ENCODE measurements at regions of chr5 and their contacts with region 1.

Region 1: GRCh38 chr5:114361724-114362196 is at the start of gene KCNN2:
- DNase-seq: peak; percentile 86
- H3K4me3 Mint-ChIP-seq: peak within 1 kb of the TSS; percentile 99
- H3K27ac Mint-ChIP-seq: peak within 1 kb of the TSS; percentile 87
- H3K4me1 Mint-ChIP-seq: no peaks in the 10 kb centered on the region
- H3K27me3 Mint-ChIP-seq: peaks cover 35% of the 10 kb centered on the region
- CTCF ChIP-seq: no peak
- total RNA-seq, gene KCNN2: 1.2 and 2.0 TPM in 2 replicates

Region 2: GRCh38 chr5:114789773-114790402 is 428.1 kb after region 1 on chr5:
- CTCF ChIA-PET with region 1: no interaction called
- intact Hi-C with region 1: loop called (anchors 5 kb)
- DNase-seq: no peak
- H3K4me3 Mint-ChIP-seq: no peak overlapping the region
- H3K27ac Mint-ChIP-seq: no peak overlapping the region
- H3K4me1 Mint-ChIP-seq: no peaks in the 10 kb centered on the region
- H3K27me3 Mint-ChIP-seq: no peaks in the 10 kb centered on the region
- CTCF ChIP-seq: peak; percentile 19

Region 3: DNA sequence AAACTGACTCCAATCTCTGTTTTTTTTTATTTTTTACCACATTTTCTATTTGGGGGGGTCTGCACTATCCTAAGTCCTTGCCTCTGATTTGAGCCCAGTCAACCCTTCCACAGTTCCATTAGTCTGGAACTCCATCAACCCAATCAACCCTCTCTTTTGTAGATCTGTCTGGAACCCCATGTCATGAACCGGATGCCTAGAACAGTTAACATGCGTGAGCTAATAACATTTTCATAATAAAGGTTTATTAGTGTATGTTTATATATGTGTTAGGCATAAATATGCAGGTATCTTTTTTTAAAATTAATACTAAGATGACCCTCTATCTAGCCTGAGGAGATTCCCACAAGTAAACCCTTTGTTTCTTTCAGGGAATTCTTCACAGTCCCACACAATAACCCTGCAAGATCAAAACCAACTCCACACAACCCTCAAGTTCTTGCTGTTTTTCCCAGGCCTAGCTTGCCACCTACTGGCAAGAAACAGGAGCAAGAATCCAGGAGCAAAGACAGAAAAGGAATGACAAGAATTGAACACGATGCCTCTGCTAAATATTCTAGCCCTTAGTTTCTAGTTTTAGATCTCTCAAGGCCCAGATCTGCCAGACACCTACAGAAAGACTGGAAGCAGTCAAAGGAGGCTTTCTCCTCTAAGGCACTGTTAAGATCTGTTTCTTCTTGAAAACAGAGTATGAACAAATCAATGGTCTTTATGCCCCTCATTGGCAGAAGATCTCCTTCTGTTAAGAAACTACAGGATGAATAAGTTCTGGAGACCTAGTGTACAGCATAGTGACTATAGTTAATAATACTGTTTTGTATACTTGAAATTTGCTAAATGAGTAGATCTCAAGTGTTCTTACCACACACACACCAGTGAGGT is 707.6 kb after region 1 on chr5:
- CTCF ChIA-PET with region 1: no interaction called
- intact Hi-C with region 1: loop called (anchors 2 kb)
- DNase-seq: peak; percentile 51
- H3K4me3 Mint-ChIP-seq: no peak overlapping the region
- H3K27ac Mint-ChIP-seq: no peak overlapping the region
- H3K4me1 Mint-ChIP-seq: peaks cover 7% of the 10 kb centered on the region
- H3K27me3 Mint-ChIP-seq: no peaks in the 10 kb centered on the region
- CTCF ChIP-seq: no peak

Region 4: GRCh38 chr5:115246361-115246991 is 884.7 kb after region 1 on chr5:
- CTCF ChIA-PET with region 1: no interaction called
- intact Hi-C with region 1: loop called (anchors 10 kb)
- DNase-seq: no peak
- H3K4me3 Mint-ChIP-seq: no peak overlapping the region
- H3K27ac Mint-ChIP-seq: no peak overlapping the region
- H3K4me1 Mint-ChIP-seq: peaks cover 31% of the 10 kb centered on the region
- H3K27me3 Mint-ChIP-seq: no peaks in the 10 kb centered on the region
- CTCF ChIP-seq: peak; percentile 70

Measured in Calu3 (cell line).